A549 (cell line): ENCODE measurements at regions of chr17 and their contacts with region 1.

Region 1: DNA sequence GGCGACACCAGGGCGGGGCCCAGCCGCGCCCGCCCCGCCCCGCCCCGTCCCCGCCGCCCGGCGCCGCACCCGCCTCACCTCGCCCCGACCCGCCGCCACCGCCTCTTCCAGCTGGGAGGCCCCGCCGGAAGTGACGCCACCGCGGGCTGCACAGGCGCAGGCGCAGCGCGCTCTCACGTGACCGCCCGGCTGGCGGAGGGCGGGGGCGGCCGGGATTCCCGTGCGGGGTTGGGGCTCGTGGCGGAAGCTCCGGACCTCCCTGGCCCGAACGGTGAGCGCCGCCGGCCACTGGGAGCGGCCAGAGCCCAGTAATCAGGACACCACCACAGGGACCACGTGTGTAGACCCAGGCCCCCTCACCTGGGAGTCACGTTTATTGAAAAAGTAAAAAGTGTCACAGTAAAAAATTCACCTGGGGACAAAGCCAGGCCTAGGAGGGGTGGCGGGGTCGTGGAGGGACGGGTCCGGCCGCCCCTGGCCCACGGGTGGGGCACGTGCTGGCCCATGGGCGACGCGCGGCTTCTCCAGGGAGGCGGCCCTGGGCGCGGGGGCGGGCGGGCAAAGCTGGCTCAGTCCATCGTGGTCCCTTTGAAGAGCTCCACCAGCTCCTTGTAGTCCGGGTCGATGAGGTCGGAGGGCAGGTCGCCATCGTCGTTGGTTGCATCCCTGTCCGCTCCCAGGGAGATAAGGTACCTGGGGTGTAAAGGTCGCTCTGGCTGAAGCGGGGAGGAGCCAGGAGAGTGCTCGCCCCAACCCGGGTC is at the start of gene MCRIP1:
- DNase-seq: peak; percentile 96 to 97
- ATAC-seq: peak; percentile 81 to 84
- H3K4me3 ChIP-seq: peak within 1 kb of the TSS; percentile 94
- H3K27ac ChIP-seq: peak within 1 kb of the TSS; percentile 93 to 99
- H3K4me1 ChIP-seq: peaks cover 21% of the 10 kb centered on the region; the same call in 2 of the 3 replicates
- CTCF ChIP-seq: no peak
- EP300 ChIP-seq: no peak
- POLR2A ChIP-seq: peak; percentile 88
- RAD21 ChIP-seq: no peak
- polyA plus RNA-seq, gene MCRIP1: 30.9 and 32.0 TPM in 2 replicates

Region 2: DNA sequence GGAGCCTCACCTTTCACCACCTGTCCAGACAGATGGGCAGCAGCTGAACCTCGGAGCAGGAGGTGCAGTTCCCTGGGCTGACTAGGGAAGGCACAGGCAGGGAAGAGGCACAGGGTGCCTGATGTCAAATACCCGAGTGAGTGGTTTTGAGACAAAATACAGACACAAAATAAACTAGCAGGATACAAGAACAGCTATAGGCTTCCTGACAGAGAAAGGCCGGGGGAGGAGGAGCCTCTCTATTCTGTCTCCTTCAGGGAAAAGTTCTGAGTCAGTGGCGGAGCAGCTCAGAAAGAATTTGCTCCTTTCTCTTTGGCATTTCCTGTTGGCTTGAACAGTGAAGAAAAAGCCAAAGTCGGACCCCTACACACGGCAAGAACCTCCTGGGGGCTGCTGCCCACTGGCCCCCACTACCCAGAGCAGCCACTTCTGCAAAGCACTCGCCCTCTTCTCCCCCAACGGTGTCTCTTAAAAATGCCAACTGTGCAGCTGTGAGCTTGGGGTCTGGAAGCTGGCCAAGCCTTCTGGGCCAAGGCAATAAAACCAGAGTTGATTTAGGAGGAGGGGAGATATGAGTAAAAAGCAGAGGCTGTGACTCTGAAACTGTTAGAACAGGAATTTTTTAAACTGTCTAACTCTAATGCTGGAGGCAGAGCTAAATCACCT is 266.7 kb before region 1 on chr17:
- CTCF ChIA-PET with region 1: no interaction called
- POLR2A ChIA-PET with region 1: no interaction called
- DNase-seq: peak; percentile 85 to 89
- ATAC-seq: peak; percentile 85 to 91
- H3K4me3 ChIP-seq: peak overlapping the region; percentile 29; the same call in 2 of the 3 replicates
- H3K27ac ChIP-seq: peak overlapping the region; percentile 88 to 91
- H3K4me1 ChIP-seq: peaks cover 70% of the 10 kb centered on the region
- CTCF ChIP-seq: no peak
- EP300 ChIP-seq: peak; percentile 49 to 87; a peak in 3 of 5 replicates
- POLR2A ChIP-seq: no peak
- RAD21 ChIP-seq: peak; percentile 32 to 44

Region 3: DNA sequence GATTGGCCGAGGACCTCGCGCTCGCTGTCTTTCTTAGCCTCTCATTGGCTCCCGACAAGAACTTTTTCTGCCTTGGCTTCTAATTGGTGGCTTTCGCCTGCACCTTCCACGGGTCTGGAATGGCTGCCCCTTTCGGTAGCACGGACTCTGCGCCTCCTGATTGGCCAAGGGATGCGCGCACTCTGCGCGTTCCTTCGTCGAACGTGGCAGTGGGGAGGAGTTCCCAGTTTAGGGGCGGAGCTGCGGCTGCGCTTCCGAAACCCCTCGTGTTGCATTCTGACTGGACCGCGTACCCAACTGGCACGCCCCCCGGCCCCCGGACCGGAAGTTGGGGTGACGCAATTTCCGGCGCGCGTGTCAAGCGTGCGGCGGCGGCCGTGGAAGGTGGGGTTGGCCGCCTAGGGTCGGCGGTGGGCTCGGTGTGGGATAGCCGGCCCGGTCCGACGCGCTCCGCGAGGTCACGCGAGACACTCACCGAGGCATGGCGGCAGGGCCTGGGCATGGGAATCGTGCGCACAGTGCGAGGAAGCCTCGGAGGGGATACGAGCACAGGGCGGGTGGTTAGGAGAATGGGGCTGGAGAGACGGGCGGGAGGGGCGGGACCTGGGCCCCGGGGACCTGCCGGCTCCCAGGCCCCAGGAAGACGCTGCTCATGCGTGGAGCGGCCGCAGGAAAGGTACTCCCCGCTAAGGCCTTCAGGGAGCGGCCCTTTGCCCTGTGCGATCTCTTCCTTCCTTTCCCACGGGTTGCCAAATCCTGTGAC is 27.6 kb after region 1 on chr17:
- CTCF ChIA-PET with region 1: interaction called, 4 read pairs
- POLR2A ChIA-PET with region 1: interaction called, 11 read pairs
- DNase-seq: peak; percentile 100
- ATAC-seq: peak; percentile 84 to 92
- H3K4me3 ChIP-seq: peak overlapping the region; percentile 72
- H3K27ac ChIP-seq: peak overlapping the region; percentile 91 to 94
- H3K4me1 ChIP-seq: peaks cover 35% of the 10 kb centered on the region
- CTCF ChIP-seq: no peak
- EP300 ChIP-seq: no peak
- POLR2A ChIP-seq: peak; percentile 98
- RAD21 ChIP-seq: peak in 1 of 2 experiments; percentile 15; a peak in 1 of 5 replicates

Region 4: DNA sequence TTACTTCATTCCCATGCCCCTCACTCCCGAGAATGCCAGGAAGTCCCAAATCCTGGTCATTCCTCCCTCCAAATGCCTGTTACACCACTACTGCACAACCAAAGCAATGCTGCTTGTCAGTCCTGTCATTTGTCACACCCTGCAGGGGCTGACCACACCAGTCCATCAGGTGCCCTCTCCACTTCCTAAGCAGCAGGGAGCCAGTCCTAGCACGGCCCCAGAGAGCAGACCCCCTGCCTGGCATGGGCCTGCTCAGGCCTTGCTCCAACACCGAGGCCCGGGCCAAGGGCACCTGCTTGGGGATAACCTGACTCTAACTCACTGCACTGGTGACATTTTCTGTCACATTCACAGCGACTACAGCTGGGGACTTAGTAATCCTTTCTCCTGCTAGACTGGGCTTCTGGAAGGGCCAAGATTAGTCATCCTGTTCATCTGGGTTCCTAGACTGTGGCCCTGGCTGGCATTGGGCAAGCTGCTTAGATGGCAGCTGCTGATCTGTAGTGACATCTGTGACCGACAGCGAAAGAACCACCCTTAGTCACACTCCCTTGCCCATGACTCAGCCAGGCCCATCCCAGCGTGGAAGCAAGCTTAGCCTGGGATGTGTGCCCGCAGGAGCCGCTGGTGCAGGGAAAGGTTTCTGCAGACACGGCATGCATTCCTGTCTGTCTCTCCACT is 52.7 kb after region 1 on chr17:
- CTCF ChIA-PET with region 1: no interaction called
- POLR2A ChIA-PET with region 1: no interaction called
- DNase-seq: no peak
- ATAC-seq: peak; percentile 6 to 28; a peak in 3 of 6 replicates
- H3K4me3 ChIP-seq: no peak overlapping the region
- H3K27ac ChIP-seq: peak overlapping the region in 1 of 2 experiments; percentile 34; a peak in 1 of 6 replicates
- H3K4me1 ChIP-seq: peaks cover 20% of the 10 kb centered on the region
- CTCF ChIP-seq: no peak
- EP300 ChIP-seq: no peak
- POLR2A ChIP-seq: no peak
- RAD21 ChIP-seq: no peak